ENCODE measurements at regions of chr16 and their contacts with region 1.

Region 1: GRCh38 chr16:71412270-71413160 is 29.3 kb downstream of the TLE7 start:
- DNase-seq: peak; percentile 71 to 89
- H3K4me3 ChIP-seq: no peak overlapping the region
- H3K27ac ChIP-seq: no peak overlapping the region
- H3K4me1 ChIP-seq: peaks cover 0 to 10% (median 9%) of the 10 kb centered on the region in 4 donors
- H3K27me3 ChIP-seq: peaks cover 0 to 78% (median 18%) of the 10 kb centered on the region in 3 donors
- CTCF ChIP-seq: peak in 5 of 7 experiments; percentile 40 to 86 (median 84)
- EP300 ChIP-seq: no peak
- POLR2A ChIP-seq: no peak

Region 2: DNA sequence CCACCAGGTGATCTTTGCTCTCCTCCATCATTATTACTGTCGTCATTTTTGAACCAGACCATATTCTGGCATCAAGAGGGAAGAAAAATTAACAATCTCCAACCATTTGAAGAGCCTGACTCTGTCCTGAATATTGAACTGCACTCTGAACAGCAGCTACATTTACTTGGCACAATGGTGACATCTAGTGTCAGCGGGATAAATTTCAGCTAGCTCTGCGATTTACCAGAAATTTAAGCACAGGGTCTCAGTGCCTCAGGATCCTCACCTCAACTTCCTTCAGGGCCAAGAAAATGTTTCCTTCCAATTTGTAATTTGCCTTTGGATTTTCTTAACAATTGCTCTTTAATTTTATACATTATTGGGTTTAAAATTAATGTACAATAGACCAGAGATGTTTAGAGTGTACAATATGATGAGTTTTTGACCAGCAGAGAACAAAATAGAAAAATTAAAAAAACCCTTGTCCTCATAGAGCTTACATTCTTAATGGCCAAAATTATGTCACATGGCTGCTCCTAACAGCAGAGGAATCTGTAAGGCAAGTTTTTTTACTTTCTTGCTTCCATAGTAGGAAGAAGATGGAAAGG is 87.4 kb after region 1 on chr16:
- intact Hi-C with region 1: loop called (anchors 5 kb)
- DNase-seq: peak in 1 of 2 donors; percentile 83
- H3K4me3 ChIP-seq: no peak overlapping the region
- H3K27ac ChIP-seq: no peak overlapping the region
- H3K4me1 ChIP-seq: no peaks in the 10 kb centered on the region
- H3K27me3 ChIP-seq: no peaks in the 10 kb centered on the region
- CTCF ChIP-seq: peak in 5 of 7 experiments; percentile 49 to 68 (median 56)
- EP300 ChIP-seq: no peak
- POLR2A ChIP-seq: no peak

Region 3: DNA sequence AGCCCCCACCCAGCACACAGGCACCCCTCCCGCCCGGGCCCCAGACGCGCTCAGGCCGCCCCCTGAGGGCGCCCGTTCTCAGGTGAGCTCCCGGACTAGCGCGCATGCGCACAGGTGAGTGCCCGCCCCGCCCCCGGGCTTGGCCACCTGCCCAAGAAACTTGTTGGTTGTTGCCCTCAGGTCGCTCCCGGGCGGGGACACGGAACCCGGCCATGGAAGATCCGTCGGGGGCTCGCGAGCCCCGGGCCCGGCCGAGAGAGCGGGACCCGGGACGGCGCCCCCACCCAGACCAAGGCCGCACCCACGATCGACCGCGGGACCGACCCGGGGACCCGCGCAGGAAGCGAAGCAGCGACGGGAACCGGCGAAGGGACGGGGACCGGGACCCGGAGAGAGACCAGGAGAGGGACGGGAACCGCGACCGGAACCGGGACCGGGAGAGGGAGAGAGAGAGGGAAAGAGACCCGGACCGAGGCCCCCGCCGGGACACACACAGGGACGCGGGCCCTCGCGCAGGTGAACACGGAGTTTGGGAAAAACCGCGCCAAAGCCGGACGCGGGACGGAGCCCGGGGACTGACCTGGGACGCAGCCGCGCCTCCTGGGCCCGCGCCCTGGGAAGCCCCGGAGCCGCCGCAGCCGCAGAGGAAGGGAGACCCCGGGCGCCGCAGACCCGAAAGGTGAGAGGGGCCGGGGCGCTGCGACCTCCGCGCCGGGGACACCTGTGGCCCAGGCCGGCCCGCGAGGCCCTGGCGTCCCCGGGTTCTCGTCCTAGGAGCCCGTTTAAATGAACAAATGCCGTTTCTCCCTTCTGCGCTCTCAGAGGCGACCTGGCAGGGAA is 213.7 kb after region 1 on chr16 and contains the start of gene MARVELD3:
- intact Hi-C with region 1: loop called (anchors 10 kb)
- DNase-seq: peak; percentile 92 to 93
- H3K4me3 ChIP-seq: peak within 1 kb of the TSS; percentile 47 to 79 (median 50)
- H3K27ac ChIP-seq: peak within 1 kb of the TSS in 2 of 5 donors; percentile 41 to 57
- H3K4me1 ChIP-seq: peaks cover 12 to 26% (median 18%) of the 10 kb centered on the region in 4 donors
- H3K27me3 ChIP-seq: peaks cover 0 to 54% (median 24%) of the 10 kb centered on the region in 3 donors
- CTCF ChIP-seq: no peak
- EP300 ChIP-seq: no peak
- POLR2A ChIP-seq: no peak
- total RNA-seq, gene MARVELD3: 1.2 to 480 (median 2.4) TPM

Measured in stomach (tissue), 19 donors.